Activated naive CD4-positive, alpha-beta T cell treated with anti-CD3 and anti-CD28 coated beads for 36 hours (primary cell): ENCODE measurements at regions of chr17 and their contacts with region 1.

Region 1: DNA sequence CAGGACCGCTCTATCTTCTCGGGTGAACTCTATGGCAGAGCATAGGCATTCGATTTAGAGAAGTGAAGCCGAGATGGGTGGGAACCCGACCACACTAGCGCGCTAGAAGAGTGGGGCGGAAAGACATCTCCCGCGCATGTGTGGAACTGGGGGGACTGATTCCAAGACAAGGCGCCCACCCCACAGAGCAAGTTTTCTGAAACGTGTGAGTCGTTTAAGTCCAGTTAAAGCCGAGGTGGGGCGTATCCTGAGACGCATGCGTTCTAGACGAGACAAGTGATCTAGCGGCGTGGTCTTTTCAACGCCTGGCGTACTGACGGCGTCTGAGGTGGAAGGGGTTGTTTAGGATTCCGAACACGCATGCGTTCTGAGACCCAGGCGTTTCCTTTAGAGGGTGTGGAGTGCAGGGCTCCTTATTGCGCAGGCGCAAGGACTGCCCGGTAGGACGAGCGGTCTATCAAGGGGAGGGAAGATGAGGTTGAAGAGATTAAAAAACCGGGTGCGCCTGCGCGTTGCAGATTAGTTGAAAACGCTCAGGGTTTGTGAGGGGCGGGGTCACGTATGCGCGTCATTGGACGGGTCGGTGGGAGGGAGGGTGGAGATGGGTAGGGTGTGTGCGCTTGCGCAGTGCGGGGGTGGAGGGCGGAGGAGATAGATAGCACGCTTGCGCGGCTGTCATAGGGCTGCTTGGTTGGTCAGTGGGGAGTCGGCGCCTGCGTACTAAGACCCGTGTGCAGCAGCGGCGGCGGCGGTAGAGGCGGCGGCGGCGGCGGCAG is at the start of gene EIF5A:
- DNase-seq: peak; percentile 100
- H3K4me3 Mint-ChIP-seq: peak within 1 kb of the TSS; percentile 86
- H3K27ac Mint-ChIP-seq: peak within 1 kb of the TSS; percentile 96
- H3K4me1 Mint-ChIP-seq: peaks cover 35% of the 10 kb centered on the region
- H3K27me3 Mint-ChIP-seq: no peaks in the 10 kb centered on the region
- total RNA-seq, gene EIF5A: 757 to 792 TPM

Region 2: GRCh38 chr17:7234083-7234951 is 72.8 kb before region 1 on chr17 and contains the start of gene DVL2:
- CTCF ChIA-PET with region 1: no interaction called
- intact Hi-C with region 1: loop called (anchors 1 kb)
- DNase-seq: peak; percentile 96
- H3K4me3 Mint-ChIP-seq: peak within 1 kb of the TSS; percentile 90
- H3K27ac Mint-ChIP-seq: peak within 1 kb of the TSS; percentile 88
- H3K4me1 Mint-ChIP-seq: peaks cover 52% of the 10 kb centered on the region
- H3K27me3 Mint-ChIP-seq: no peaks in the 10 kb centered on the region
- total RNA-seq, gene DVL2: 26.7 to 29.4 TPM

Region 3: DNA sequence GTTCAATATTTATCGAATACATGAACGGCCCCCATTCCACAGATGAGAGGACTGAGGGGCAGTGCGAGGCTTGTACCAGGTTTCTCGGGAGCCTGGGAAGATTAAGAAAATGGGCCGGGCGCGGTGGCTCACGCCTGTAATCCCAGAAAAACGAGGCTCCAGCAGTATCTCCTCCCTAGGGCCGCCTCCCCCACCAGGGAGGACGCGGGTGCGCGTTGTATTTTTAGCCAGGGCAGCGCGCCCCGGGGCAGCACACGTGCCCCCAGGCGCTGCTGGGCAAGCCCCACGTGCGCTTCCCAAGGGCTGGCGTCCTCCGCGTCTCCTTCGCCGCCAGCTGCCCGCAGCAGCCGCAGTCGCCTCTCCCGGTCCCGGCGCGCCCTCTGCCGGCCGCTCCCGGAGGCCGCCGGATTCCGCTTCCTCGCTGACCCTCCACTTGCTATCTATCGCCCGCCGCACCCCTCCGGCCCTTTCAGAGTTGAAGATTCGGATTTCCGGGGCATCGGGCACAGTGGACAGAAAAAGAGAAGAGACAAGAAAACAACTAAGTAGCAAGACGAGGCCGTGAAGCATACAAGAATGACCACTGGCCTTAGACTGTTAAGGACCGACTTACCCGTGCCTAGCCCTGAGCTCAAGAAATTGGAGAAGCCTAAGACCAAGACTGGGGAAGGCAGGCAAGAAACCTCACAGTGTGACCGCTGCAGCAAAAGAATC is 10.8 kb before region 1 on chr17:
- CTCF ChIA-PET with region 1: interaction called, 13 read pairs
- intact Hi-C with region 1: loop called (anchors 1 kb)
- DNase-seq: peak; percentile 72
- H3K4me3 Mint-ChIP-seq: peak overlapping the region; percentile 32
- H3K27ac Mint-ChIP-seq: no peak overlapping the region
- H3K4me1 Mint-ChIP-seq: peaks cover 19% of the 10 kb centered on the region
- H3K27me3 Mint-ChIP-seq: peaks cover 24% of the 10 kb centered on the region

Region 4: GRCh38 chr17:7403977-7404736 is 97.1 kb after region 1 on chr17 and contains the start of gene TMEM256:
- CTCF ChIA-PET with region 1: interaction called, 3 read pairs
- intact Hi-C with region 1: loop called (anchors 1 kb)
- DNase-seq: peak; percentile 99
- H3K4me3 Mint-ChIP-seq: peak within 1 kb of the TSS; percentile 93
- H3K27ac Mint-ChIP-seq: peak within 1 kb of the TSS; percentile 93
- H3K4me1 Mint-ChIP-seq: peaks cover 19% of the 10 kb centered on the region
- H3K27me3 Mint-ChIP-seq: peaks cover 2% of the 10 kb centered on the region
- total RNA-seq, gene TMEM256: 65.6 to 66.3 TPM

Region 5: DNA sequence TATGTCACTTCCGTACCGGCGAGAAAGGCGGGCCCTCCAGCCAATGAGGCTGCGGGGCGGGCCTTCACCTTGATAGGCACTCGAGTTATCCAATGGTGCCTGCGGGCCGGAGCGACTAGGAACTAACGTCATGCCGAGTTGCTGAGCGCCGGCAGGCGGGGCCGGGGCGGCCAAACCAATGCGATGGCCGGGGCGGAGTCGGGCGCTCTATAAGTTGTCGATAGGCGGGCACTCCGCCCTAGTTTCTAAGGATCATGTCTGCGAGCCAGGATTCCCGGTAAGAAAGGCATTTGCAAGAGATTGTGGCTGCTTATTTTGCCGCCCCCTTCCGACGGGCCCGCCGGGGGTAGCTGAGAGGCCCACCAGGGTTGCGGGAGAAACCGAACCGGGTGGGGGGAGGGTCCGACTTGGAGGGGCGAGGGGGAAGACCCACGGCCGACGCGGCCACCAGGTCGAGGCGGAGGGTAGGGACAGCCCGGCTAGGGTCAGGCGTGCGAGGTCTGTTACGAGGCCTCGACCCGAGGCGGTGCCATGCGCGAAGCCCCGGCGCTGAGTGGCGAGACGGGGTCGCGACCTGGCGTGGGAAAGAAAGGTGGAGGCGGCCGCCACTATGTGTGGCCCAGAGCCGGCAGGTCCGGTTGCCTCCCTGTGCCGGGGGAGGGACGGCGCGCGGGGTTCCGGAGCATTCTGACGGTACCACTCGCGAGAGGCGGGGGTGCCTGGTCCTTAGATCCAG is 265.7 kb after region 1 on chr17:
- CTCF ChIA-PET with region 1: no interaction called
- intact Hi-C with region 1: loop called (anchors 1 kb)
- DNase-seq: peak; percentile 100
- H3K4me3 Mint-ChIP-seq: peak overlapping the region; percentile 85
- H3K27ac Mint-ChIP-seq: peak overlapping the region; percentile 99
- H3K4me1 Mint-ChIP-seq: peaks cover 55% of the 10 kb centered on the region
- H3K27me3 Mint-ChIP-seq: no peaks in the 10 kb centered on the region

Region 6: GRCh38 chr17:7844292-7845154 is 537.4 kb after region 1 on chr17:
- CTCF ChIA-PET with region 1: no interaction called
- intact Hi-C with region 1: loop called (anchors 5 kb)
- DNase-seq: peak; percentile 90
- H3K4me3 Mint-ChIP-seq: peak overlapping the region; percentile 89
- H3K27ac Mint-ChIP-seq: peak overlapping the region; percentile 99
- H3K4me1 Mint-ChIP-seq: peaks cover 46% of the 10 kb centered on the region
- H3K27me3 Mint-ChIP-seq: no peaks in the 10 kb centered on the region